ENCODE measurements at regions of chr1 and their contacts with region 1.

Region 1: GRCh38 chr1:36576118-36576517 is 93.4 kb upstream of the CSF3R start:
- DNase-seq: peak; percentile 45 to 69
- ATAC-seq: peak; percentile 53 to 78 (median 60)
- H3K4me3 ChIP-seq: no peak overlapping the region
- H3K4me3 Mint-ChIP-seq: no peak overlapping the region
- H3K27ac ChIP-seq: no peak overlapping the region
- H3K27ac Mint-ChIP-seq: no peak overlapping the region
- H3K4me1 ChIP-seq: no peaks in the 10 kb centered on the region
- H3K4me1 Mint-ChIP-seq: no peaks in the 10 kb centered on the region
- H3K27me3 ChIP-seq: no peaks in the 10 kb centered on the region
- H3K27me3 Mint-ChIP-seq: peaks cover 20 to 27% of the 10 kb centered on the region in 2 donors
- CTCF ChIP-seq: peak; percentile 65

Region 2: DNA sequence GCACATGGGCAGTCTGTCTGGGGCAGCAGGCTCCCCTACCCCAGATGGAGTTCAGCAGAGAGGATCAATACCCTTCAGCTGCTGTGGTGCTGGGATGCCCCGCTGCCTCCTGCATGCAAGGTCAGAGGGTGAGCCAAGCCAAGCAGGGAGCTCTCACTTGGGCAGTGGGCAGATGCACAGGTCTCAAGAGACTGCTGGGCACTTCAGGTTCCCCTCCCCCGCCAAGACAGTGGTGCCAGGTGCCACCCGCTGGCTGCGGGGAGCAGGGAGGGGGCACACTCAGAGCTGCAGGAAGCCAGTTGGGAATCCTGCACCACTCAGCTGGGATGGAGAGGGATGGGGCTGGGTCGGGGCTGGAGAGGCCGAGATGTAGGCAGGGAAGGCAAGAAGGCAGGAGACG is 236.9 kb before region 1 on chr1:
- intact Hi-C with region 1: no loop called
- DNase-seq: no peak
- ATAC-seq: no peak
- H3K4me3 ChIP-seq: no peak overlapping the region
- H3K4me3 Mint-ChIP-seq: no peak overlapping the region
- H3K27ac ChIP-seq: no peak overlapping the region
- H3K27ac Mint-ChIP-seq: peak overlapping the region in 1 of 2 donors; percentile 10
- H3K4me1 ChIP-seq: peaks cover 5% of the 10 kb centered on the region
- H3K4me1 Mint-ChIP-seq: peaks cover 0 to 13% of the 10 kb centered on the region in 2 donors
- H3K27me3 ChIP-seq: no peaks in the 10 kb centered on the region
- H3K27me3 Mint-ChIP-seq: no peaks in the 10 kb centered on the region
- CTCF ChIP-seq: no peak

Region 3: GRCh38 chr1:36650200-36651065 is 74.3 kb after region 1 on chr1:
- intact Hi-C with region 1: loop called (anchors 2 kb)
- DNase-seq: peak; percentile 54 to 70
- ATAC-seq: peak; percentile 70 to 90 (median 80)
- H3K4me3 ChIP-seq: no peak overlapping the region
- H3K4me3 Mint-ChIP-seq: no peak overlapping the region
- H3K27ac ChIP-seq: no peak overlapping the region
- H3K27ac Mint-ChIP-seq: no peak overlapping the region
- H3K4me1 ChIP-seq: peaks cover 10% of the 10 kb centered on the region
- H3K4me1 Mint-ChIP-seq: peaks cover 20 to 26% of the 10 kb centered on the region in 2 donors
- H3K27me3 ChIP-seq: peaks cover 6% of the 10 kb centered on the region
- H3K27me3 Mint-ChIP-seq: peaks cover 36 to 48% of the 10 kb centered on the region in 2 donors
- CTCF ChIP-seq: peak; percentile 97

Region 4: DNA sequence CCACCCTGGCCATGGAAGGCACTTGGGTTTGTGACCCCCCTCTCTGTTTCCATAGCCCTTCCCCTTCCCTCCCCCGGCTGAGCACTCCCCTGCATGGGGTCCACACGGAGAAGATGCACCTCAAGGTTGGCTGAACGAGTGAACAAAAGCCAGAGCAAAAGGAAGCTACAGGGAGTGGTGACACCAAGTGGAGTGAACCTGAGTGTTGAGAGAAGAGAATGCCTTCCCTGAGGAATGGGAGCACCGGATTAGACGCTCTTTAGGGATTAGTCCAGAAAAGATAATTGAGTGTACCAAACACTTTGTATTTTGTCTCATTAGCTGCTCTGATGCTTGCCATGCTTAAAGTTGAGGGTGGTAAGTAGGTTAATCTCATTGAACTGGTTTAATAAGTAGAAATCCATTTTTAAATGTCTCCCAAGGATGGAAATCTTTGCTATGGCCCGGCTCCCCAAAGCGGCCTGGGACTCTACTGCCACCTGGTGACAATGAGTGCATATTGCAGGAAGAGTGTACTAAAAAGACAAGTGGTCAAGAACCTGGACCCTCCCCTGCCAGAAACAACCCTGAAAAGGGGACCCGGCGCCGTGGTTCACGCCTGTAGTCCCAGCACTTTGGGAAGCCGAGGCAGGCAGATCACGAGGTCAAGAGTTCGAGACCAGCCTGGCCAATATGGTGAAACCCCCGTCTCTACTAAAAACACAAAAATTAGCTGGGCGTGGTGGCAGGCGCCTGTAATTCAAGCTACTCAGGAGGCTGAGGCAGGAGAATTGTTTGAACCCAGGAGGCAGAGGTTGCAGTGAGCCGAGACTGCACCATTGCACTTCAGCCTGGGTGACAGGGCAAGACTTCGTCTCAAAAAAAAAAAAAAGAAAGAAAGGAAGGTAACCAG is 747.6 kb after region 1 on chr1:
- intact Hi-C with region 1: loop called (anchors 5 kb)
- DNase-seq: peak in 1 of 2 donors; percentile 28
- ATAC-seq: no peak
- H3K4me3 ChIP-seq: no peak overlapping the region
- H3K4me3 Mint-ChIP-seq: no peak overlapping the region
- H3K27ac ChIP-seq: no peak overlapping the region
- H3K27ac Mint-ChIP-seq: no peak overlapping the region
- H3K4me1 ChIP-seq: no peaks in the 10 kb centered on the region
- H3K4me1 Mint-ChIP-seq: no peaks in the 10 kb centered on the region
- H3K27me3 ChIP-seq: no peaks in the 10 kb centered on the region
- H3K27me3 Mint-ChIP-seq: peaks cover 25 to 36% of the 10 kb centered on the region in 2 donors
- CTCF ChIP-seq: peak; percentile 50

Region 5: DNA sequence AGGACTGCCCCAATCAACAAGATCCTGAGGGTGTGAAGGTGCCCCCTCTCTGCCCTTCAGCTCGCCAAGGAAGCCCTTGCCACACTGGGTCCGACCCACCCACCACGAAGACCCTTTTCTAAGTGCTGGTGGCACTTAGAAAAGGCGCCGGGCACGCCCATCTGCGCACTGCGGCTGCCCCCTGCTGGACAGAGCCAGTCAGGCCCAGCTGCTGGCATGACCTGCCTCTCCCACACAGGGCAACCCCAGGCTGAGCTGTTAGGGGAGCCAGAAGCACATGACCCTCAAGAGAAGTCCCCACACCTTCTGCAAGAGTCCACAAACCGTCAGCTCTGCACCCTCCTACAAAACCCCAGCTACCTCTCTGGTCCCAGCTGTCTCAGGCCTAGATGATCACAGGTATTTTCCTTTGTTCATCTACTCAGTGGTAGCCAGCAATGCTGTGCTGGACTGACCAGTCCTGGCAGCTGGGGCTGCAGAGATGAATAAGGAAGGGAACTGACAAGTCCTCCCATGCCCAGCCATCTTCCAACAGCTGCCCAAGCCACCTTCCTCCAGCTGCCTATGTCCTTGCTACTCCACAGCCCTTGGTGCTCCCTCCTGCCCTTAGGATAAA is 858.3 kb after region 1 on chr1:
- intact Hi-C with region 1: loop called (anchors 2 kb)
- DNase-seq: peak; percentile 66 to 76
- ATAC-seq: peak; percentile 86 to 95 (median 95)
- H3K4me3 ChIP-seq: no peak overlapping the region
- H3K4me3 Mint-ChIP-seq: no peak overlapping the region
- H3K27ac ChIP-seq: no peak overlapping the region
- H3K27ac Mint-ChIP-seq: no peak overlapping the region
- H3K4me1 ChIP-seq: peaks cover 5% of the 10 kb centered on the region
- H3K4me1 Mint-ChIP-seq: no peaks in the 10 kb centered on the region
- H3K27me3 ChIP-seq: no peaks in the 10 kb centered on the region
- H3K27me3 Mint-ChIP-seq: peaks cover 6 to 20% of the 10 kb centered on the region in 2 donors
- CTCF ChIP-seq: peak; percentile 90

Measured in natural killer cell (primary cell).